Activated CD8-positive, alpha-beta memory T cell treated with anti-CD3 and anti-CD28 coated beads, Interleukin-2, amount 10 ng/mL, durations not matched to agents 7 days and 5 days (primary cell): ENCODE measurements at regions of chr15 and their contacts with region 1.

Region 1: DNA sequence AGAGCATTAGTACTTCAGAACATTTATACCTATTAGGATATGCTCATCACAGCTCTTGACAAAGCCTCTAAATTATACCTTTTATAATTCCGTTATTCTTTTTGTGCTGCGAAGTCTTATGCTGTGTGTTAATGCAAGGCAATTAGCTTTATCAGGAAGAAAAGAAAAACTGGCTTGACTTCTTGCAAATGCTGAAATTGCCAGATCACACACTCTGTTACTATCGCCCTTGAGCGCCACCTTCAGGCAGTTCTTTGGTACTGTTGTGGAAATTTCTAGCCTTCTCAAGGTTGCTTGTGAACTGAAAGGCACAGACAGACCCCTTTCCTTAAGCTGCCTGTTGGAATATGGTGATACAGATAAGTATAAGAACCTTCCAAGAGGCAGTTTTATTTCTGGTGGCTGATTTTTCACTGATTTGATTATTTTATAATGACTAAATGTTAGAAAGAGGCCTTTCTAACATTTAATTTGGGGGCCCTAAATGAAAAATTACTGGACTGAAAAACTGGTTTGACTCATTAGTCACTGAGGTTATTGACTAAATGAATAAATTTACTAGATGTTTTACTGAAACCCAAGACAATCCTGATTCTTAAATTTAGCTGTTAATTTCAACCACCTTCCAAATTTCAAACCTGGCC is 126.2 kb upstream of the RASGRP1 start:
- DNase-seq: peak; percentile 89
- ATAC-seq: peak; percentile 45
- H3K4me3 Mint-ChIP-seq: no peak overlapping the region
- H3K27ac Mint-ChIP-seq: peak overlapping the region; percentile 96
- H3K4me1 Mint-ChIP-seq: peaks cover 88% of the 10 kb centered on the region
- H3K27me3 Mint-ChIP-seq: no peaks in the 10 kb centered on the region

Region 2: DNA sequence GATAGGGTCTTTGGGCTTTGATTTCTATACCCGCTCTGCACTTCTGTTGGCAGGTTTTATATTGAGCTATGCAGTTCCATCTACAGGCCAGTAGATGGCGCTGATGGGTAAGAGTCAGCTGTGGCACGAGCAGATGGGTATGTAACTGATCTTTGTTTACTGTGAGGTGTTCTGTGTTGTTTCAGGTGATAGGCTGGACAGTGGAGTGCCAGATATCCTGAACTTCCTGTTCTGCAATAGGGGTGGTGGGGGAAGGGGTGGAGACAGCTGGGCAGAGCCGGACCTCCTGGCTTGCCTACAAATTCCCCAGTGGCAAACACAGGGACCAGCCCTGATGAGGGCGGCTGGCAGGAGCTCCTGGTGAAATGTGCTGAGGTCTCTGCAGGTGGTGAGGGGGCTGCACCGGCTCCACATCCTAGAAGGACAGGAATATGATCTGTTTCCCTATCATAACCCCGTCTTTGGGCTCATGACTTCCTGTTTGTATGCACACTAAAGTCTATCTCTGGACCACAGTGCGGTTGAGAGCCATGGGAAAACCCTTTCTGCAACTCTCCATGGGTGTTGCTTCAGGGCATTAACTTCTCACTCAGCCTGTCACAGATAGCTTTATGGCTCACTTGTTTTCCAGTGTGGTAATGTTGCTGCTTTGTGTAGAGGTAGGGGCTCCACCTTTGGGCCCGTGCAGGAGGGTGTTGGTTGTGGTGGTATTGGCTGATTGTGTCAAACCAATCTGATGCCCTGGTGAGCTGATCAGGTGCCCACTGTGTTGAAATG is 250.3 kb before region 1 on chr15:
- CTCF ChIA-PET with region 1: interaction called, 143 read pairs
- DNase-seq: peak; percentile 63
- ATAC-seq: peak; percentile 90
- H3K4me3 Mint-ChIP-seq: no peak overlapping the region
- H3K27ac Mint-ChIP-seq: peak overlapping the region; percentile 7
- H3K4me1 Mint-ChIP-seq: peaks cover 8% of the 10 kb centered on the region
- H3K27me3 Mint-ChIP-seq: peaks cover 44% of the 10 kb centered on the region

Region 3: DNA sequence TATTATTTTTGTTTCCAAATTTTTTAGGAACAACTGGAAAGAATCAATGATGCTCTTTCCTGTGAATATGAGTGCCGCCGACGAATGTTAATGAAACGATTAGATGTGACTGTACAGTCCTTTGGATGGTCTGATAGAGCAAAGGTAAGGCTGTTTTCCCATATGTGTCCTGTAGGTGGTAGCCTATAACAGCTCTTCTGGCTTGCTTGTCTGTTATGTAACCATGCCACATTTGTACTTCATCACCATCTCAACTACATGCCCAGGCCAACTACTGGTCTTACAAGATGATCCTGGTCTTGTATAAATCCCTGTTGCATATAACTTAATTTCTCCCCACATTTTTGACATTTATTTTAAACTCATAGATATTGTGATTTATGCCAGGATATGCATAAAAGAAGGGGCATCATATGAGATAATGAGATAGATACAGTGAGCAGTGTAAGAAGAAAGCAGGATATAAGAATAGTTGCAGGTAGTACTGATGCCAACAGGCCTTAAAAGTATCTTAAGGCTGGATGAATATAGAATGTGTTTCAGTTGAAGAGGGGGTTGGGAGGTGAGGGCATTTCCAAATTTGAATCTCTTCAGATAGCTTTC is 216.6 kb before region 1 on chr15:
- CTCF ChIA-PET with region 1: interaction called, 79 read pairs
- DNase-seq: peak; percentile 48
- ATAC-seq: peak; percentile 98
- H3K4me3 Mint-ChIP-seq: no peak overlapping the region
- H3K27ac Mint-ChIP-seq: peak overlapping the region; percentile 30
- H3K4me1 Mint-ChIP-seq: peaks cover 6% of the 10 kb centered on the region
- H3K27me3 Mint-ChIP-seq: no peaks in the 10 kb centered on the region

Region 4: GRCh38 chr15:38490242-38490922 is 200.4 kb before region 1 on chr15:
- CTCF ChIA-PET with region 1: interaction called, 10 read pairs
- DNase-seq: no peak
- ATAC-seq: no peak
- H3K4me3 Mint-ChIP-seq: no peak overlapping the region
- H3K27ac Mint-ChIP-seq: peak overlapping the region; percentile 35
- H3K4me1 Mint-ChIP-seq: peaks cover 44% of the 10 kb centered on the region
- H3K27me3 Mint-ChIP-seq: no peaks in the 10 kb centered on the region

Region 5: DNA sequence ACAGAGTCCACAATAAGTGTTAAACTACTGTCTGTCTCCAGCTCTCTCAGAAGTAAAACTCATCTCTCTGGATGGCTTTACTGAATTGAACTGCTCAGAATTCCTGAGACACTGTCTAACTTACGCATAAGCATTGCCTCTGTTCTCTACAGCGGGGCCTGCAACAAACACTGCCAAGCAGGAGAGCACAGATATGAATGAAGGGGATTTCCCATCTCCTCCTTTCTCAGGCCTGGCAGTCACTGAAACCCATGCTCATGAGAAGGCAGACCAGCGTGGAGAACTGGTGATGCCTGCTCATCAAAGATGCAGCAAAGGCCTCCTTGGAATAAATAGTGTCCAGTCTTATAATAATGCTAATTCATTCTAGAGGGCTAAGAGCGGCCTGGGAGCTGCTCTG is 136.5 kb before region 1 on chr15:
- CTCF ChIA-PET with region 1: interaction called, 436 read pairs
- DNase-seq: no peak
- ATAC-seq: peak; percentile 60
- H3K4me3 Mint-ChIP-seq: no peak overlapping the region
- H3K27ac Mint-ChIP-seq: peak overlapping the region; percentile 77
- H3K4me1 Mint-ChIP-seq: peaks cover 85% of the 10 kb centered on the region
- H3K27me3 Mint-ChIP-seq: no peaks in the 10 kb centered on the region

Region 6: GRCh38 chr15:38647683-38648082 is 43.1 kb before region 1 on chr15:
- CTCF ChIA-PET with region 1: interaction called, 102 read pairs
- DNase-seq: no peak
- ATAC-seq: no peak
- H3K4me3 Mint-ChIP-seq: no peak overlapping the region
- H3K27ac Mint-ChIP-seq: no peak overlapping the region
- H3K4me1 Mint-ChIP-seq: peaks cover 58% of the 10 kb centered on the region
- H3K27me3 Mint-ChIP-seq: no peaks in the 10 kb centered on the region

Region 7: DNA sequence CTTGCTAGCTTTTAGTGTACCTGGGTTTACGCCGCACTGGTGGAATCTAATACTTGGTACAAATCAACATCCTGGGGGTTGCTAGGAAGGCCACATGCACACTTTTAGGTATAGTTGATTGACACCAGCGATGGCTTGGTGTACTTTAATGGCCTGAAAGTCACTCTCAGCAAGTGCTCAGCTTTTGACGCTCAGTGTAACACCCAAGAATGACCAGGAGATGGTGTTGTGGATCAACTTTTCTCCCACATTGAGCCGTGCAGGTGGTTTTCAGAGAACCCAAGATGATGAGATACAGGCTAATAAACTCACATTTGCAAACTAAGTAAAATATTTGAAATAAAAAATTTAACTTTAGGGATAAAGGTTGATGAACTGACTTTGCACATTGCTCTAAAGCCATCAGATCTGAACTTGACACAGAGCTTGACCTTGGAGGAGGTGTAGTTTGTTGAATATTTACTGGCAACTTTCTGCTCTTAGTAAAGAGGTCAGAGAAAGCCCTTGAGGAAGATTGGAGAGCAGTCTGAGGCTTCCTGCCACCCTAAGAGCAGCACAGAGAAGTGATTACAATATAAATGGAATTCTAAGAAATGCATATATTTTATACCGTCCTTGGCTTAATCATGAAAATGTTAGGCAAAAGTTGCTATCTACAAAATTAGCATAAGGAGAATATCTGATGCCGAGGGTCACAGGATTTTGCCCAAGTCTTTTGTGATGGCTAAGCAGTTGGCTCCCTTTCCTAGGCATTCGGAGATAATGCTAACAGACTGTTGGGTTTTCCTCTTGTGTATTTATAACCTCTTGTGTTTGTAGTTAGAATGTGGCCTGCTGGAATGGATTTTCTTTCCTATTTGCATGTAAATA is 17.2 kb after region 1 on chr15:
- CTCF ChIA-PET with region 1: interaction called, 11 read pairs
- DNase-seq: peak; percentile 54
- ATAC-seq: peak; percentile 81
- H3K4me3 Mint-ChIP-seq: no peak overlapping the region
- H3K27ac Mint-ChIP-seq: no peak overlapping the region
- H3K4me1 Mint-ChIP-seq: peaks cover 27% of the 10 kb centered on the region
- H3K27me3 Mint-ChIP-seq: no peaks in the 10 kb centered on the region